Dorsolateral prefrontal cortex (tissue), 120 donors: ENCODE measurements at regions of chr17 and their contacts with region 1.

Region 1: DNA sequence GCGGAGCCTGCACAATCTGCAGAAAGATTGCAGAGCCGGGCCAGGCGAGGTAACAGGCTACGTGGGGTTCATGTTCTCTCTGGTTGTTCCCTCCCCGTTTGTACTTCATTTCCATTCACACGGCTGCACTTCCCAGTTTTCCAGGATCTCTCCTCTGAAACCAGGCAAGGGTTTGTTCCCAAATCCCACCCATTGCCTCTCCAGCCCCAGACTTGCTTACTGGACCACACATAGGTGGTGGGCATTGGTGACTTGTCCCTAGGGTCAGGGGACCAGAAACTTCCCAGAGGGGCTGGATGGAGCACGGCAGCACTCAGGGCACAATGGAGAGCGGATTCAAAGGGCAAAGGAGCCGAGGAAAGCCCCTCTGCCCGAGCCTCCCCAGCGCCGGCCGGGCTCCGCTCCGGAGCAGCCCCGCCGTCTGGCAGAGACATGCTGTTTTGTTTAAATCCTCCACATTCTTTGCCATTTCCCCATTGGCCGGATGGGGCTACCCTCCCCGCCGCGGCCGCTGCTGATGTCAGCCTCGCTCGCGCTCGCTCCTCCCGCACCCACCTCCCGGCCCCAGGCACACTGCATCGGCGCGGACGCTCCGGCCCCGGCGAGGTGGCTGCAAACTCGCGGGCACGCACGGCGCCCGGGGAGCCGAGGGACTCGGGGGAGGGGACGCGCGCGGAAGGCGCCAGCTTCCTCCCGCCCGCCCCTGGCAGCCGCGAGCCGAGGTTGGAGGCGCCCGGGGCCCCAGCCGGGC is at the start of gene PITPNC1:
- DNase-seq: peak; percentile 73 to 92 (median 86)
- H3K4me3 ChIP-seq: peak within 1 kb of the TSS; percentile 45 to 94 (median 87)
- H3K27ac ChIP-seq: peak within 1 kb of the TSS; percentile 64 to 97 (median 93)
- H3K27me3 ChIP-seq: no peaks in the 10 kb centered on the region
- CTCF ChIP-seq: peak in 45 of 56 donors; percentile 10 to 71 (median 37)
- total RNA-seq, gene PITPNC1: 38.9 to 154 (median 76.7) TPM

Region 2: GRCh38 chr17:67245073-67245755 is 131.7 kb before region 1 on chr17 and contains the start of gene HELZ:
- intact Hi-C with region 1: no loop called
- DNase-seq: peak in 9 of 10 donors; percentile 36 to 77 (median 62)
- H3K4me3 ChIP-seq: peak within 1 kb of the TSS; percentile 63 to 100 (median 96)
- H3K27ac ChIP-seq: peak within 1 kb of the TSS in 54 of 59 donors; percentile 36 to 93 (median 78)
- H3K27me3 ChIP-seq: no peaks in the 10 kb centered on the region
- CTCF ChIP-seq: peak in 9 of 56 donors; percentile 5 to 38 (median 18)
- total RNA-seq, gene HELZ: 48.6 to 93.2 (median 71.0) TPM

Region 3: DNA sequence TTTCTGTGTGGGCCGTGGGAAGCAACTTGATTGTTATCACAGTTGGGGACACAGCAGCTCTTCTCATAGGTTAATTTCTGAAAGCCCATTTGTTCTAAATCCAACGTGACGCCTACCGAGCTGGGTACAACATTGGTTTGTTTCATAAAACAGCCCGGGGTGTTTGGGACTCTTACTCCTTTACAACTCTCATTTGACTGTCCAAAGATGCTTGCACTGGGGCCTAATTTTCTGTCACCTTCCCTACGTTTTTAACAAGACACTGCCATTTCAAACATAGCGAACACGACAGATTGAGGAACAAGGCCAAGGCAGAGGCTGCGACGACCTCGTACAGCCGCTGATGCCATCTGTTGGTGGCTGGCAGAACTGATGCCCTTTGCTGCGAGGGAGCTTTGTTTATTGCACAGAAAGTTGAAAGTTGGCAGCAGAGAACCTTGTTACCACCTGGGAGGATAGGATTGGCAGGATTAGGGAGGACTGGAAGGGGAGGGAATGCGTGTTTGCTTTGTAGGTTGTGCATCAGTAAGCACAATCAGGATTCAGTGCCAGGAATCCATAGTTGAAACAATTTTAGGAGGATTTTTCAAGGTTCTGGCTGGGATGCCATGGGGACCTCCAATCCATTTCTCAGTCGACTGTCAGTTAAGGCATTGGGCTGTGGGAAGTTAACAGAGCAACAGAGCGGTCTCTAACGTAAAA is 98.5 kb after region 1 on chr17:
- intact Hi-C with region 1: loop called (anchors 2 kb)
- DNase-seq: peak; percentile 67 to 88 (median 81)
- H3K4me3 ChIP-seq: peak overlapping the region in 54 of 59 donors; percentile 9 to 59 (median 40)
- H3K27ac ChIP-seq: peak overlapping the region; percentile 13 to 97 (median 84)
- H3K27me3 ChIP-seq: no peaks in the 10 kb centered on the region
- CTCF ChIP-seq: peak; percentile 69 to 92 (median 86)

Region 4: DNA sequence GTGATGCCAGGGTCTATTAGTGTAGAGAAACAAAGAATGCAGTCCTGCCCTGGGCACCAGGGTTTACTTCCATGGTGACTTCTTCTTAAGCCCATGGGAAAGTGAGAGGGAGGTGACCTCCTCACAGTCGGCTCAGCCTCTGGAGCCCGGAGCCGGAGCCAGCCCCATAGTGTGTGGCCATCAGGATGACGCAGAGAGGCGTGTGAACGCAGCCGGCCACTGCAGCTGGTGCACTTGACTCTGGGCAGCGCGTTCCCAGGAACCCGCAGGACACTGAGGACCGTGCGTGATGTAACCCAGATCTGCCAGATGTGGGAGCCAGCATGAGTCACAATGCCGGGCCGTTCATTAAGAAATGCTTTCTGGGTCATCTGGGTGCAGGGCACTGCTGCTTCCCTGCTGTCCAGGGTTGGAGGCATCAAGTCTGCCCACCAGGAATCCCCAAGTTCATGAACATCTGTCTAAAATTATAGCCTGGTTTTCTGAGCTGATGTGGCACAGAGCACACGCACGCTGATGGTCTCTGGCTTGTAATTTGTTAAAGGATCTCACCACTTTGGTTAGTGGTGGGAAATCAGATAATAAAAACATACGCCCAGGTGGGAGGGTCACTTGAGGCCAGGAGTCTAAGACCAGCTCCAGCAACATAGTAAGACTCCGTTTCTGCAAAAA is 114.2 kb after region 1 on chr17:
- intact Hi-C with region 1: loop called in 1 of 2 experiments (anchors 5 kb)
- DNase-seq: peak in 9 of 10 donors; percentile 63 to 91 (median 79)
- H3K4me3 ChIP-seq: peak overlapping the region in 53 of 59 donors; percentile 3 to 59 (median 31)
- H3K27ac ChIP-seq: peak overlapping the region in 58 of 59 donors; percentile 7 to 94 (median 82)
- H3K27me3 ChIP-seq: no peaks in the 10 kb centered on the region
- CTCF ChIP-seq: peak in 11 of 56 donors; percentile 6 to 34 (median 18)

Region 5: GRCh38 chr17:67606471-67606870 is 229.6 kb after region 1 on chr17:
- intact Hi-C with region 1: loop called in 1 of 2 experiments (anchors 5 kb)
- DNase-seq: peak in 1 of 10 donors; percentile 33
- H3K4me3 ChIP-seq: no peak overlapping the region
- H3K27ac ChIP-seq: peak overlapping the region in 15 of 59 donors; percentile 6 to 60 (median 29)
- H3K27me3 ChIP-seq: no peaks in the 10 kb centered on the region
- CTCF ChIP-seq: no peak

Region 6: GRCh38 chr17:67689534-67690177 is 312.7 kb after region 1 on chr17:
- intact Hi-C with region 1: loop called (anchors 2 kb)
- DNase-seq: peak in 3 of 10 donors; percentile 13 to 56 (median 52)
- H3K4me3 ChIP-seq: no peak overlapping the region
- H3K27ac ChIP-seq: peak overlapping the region in 1 of 59 donors; percentile 10
- H3K27me3 ChIP-seq: no peaks in the 10 kb centered on the region
- CTCF ChIP-seq: peak; percentile 69 to 96 (median 88)

Region 7: GRCh38 chr17:67717624-67718329 is 340.9 kb after region 1 on chr17 and contains the start of gene NOL11:
- intact Hi-C with region 1: loop called in 1 of 2 experiments (anchors 10 kb)
- DNase-seq: peak; percentile 99 to 100 (median 100)
- H3K4me3 ChIP-seq: peak within 1 kb of the TSS; percentile 61 to 100 (median 87)
- H3K27ac ChIP-seq: peak within 1 kb of the TSS; percentile 45 to 96 (median 87)
- H3K27me3 ChIP-seq: no peaks in the 10 kb centered on the region
- CTCF ChIP-seq: peak; percentile 78 to 99 (median 95)
- total RNA-seq, gene NOL11: 16.2 to 36.1 (median 25.5) TPM